Activated T-helper 2 cell treated with anti-CD3 and anti-CD28 coated beads, Interferon-gamma antibody, Interleukin-2, Interleukin-4, amounts not matched to agents 10 μg/mL and 5 μg/mL and 100 μg/mL, durations not matched to agents 14 hours and 24 hours and 36 hours (primary cell): ENCODE measurements at regions of chr6 and their contacts with region 1.

Region 1: GRCh38 chr6:105209950-105210706 is 30.3 kb upstream of the POPDC3 start:
- DNase-seq: no peak
- H3K4me3 Mint-ChIP-seq: no peak overlapping the region
- H3K27ac Mint-ChIP-seq: no peak overlapping the region
- H3K4me1 Mint-ChIP-seq: peaks cover 17% of the 10 kb centered on the region
- H3K27me3 Mint-ChIP-seq: peaks cover 9% of the 10 kb centered on the region

Region 2: DNA sequence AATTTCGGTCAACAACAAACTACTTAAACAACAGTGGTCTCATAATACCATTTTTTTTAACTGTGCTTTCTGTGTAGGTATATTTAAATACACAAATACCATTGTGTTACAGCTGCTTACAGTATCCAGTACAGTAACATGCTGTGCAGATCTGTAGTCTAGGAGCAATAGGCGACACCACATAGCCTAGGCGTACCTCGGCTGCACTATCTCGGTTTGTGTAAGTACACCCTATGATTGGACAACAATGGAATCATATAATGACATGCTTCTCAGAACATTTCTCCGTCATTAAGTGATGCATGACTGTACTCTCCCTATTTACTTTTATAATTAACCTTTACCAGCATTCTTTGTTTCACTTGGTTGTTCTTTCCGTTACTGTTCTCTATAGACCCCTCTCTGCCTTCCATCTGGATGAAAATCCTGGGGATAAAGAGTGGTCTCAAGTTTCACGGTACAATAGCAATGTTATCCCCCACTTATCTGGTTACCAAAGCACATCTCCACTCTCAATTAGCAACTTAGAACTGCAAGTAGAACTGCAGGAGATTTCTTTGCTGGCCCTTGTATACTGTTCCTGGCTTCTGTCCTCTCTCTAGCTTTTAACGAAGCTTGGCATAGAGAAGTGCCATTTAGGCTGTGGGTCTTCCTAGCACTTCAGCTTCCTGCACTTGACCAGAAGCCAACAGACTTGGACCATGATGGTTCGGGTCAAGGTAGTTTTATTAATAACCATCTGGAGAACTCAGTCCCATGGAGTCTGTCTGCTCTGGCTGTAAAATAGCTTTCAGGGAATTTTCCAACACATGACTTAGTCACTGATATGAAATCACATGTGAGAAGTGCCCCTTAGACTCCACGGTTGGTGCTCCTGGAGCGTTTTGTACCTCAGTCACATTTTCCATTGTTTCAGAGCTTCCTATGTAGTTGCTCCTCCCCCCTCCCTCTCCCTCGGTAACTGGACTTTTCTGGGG is 50.1 kb after region 1 on chr6:
- intact Hi-C with region 1: loop called (anchors 5 kb)
- DNase-seq: no peak
- H3K4me3 Mint-ChIP-seq: no peak overlapping the region
- H3K27ac Mint-ChIP-seq: no peak overlapping the region
- H3K4me1 Mint-ChIP-seq: peaks cover 11% of the 10 kb centered on the region
- H3K27me3 Mint-ChIP-seq: peaks cover 20% of the 10 kb centered on the region

Region 3: GRCh38 chr6:105402939-105403935 is 193.1 kb after region 1 on chr6 and contains the start of gene PREP:
- intact Hi-C with region 1: loop called (anchors 5 kb)
- DNase-seq: peak; percentile 82
- H3K4me3 Mint-ChIP-seq: peak within 1 kb of the TSS; percentile 96
- H3K27ac Mint-ChIP-seq: peak within 1 kb of the TSS; percentile 79
- H3K4me1 Mint-ChIP-seq: peaks cover 45% of the 10 kb centered on the region
- H3K27me3 Mint-ChIP-seq: peaks cover 7% of the 10 kb centered on the region
- total RNA-seq, gene PREP: 52.7 and 52.9 TPM in 2 replicates